Body of pancreas (tissue), 4 donors: ENCODE measurements at regions of chr19 and their contacts with region 1.

Region 1: GRCh38 chr19:15323496-15324227 is 8.7 kb downstream of the BRD4 start:
- DNase-seq: peak; percentile 69 to 73 (median 70)
- ATAC-seq: peak; percentile 70
- H3K4me3 ChIP-seq: no peak overlapping the region
- H3K27ac ChIP-seq: peak overlapping the region; percentile 73 to 87 (median 79)
- H3K4me1 ChIP-seq: peaks cover 99% of the 10 kb centered on the region
- H3K27me3 ChIP-seq: no peaks in the 10 kb centered on the region
- CTCF ChIP-seq: no peak
- POLR2A ChIP-seq: peak in 1 of 3 donors; percentile 27

Region 2: GRCh38 chr19:15180451-15181390 is 142.9 kb before region 1 on chr19:
- intact Hi-C with region 1: no loop called
- DNase-seq: peak; percentile 57 to 81 (median 70)
- ATAC-seq: peak; percentile 60
- H3K4me3 ChIP-seq: no peak overlapping the region
- H3K27ac ChIP-seq: no peak overlapping the region
- H3K4me1 ChIP-seq: peaks cover 9% of the 10 kb centered on the region
- H3K27me3 ChIP-seq: no peaks in the 10 kb centered on the region
- CTCF ChIP-seq: no peak
- POLR2A ChIP-seq: no peak

Region 3: DNA sequence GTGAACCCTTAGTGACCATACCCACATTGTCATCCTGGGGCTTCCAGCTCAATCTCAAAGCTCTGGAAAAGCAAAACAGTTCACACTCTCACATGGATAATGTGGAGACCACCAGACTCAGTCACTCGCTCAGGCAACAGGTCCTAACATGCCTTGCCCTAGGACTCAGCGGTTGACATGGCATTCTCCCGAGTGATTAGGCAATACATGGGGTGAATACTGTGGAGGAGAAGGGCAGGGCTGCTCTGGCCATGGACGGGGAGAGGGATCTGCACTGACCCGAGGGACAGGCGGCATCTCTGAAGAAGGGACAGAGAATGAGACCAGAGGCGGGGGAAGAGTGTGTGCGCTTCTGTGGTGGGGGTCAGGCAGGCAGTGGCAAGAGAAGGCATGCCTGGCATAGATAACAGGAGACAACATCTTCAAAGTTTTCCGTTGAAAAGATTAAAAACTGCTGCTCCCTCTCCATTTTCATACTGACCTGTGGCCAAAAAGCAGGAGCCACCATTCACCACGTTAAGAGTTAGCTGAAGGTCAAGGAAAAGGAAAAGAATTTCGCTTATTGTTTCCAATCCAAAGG is 46.9 kb before region 1 on chr19:
- intact Hi-C with region 1: loop called (anchors 10 kb)
- DNase-seq: no peak
- ATAC-seq: no peak
- H3K4me3 ChIP-seq: no peak overlapping the region
- H3K27ac ChIP-seq: no peak overlapping the region
- H3K4me1 ChIP-seq: peaks cover 79% of the 10 kb centered on the region
- H3K27me3 ChIP-seq: no peaks in the 10 kb centered on the region
- CTCF ChIP-seq: no peak
- POLR2A ChIP-seq: no peak